Esophagus muscularis mucosa (tissue), 4 donors: ENCODE measurements at regions of chr16 and their contacts with region 1.

Region 1: GRCh38 chr16:8278181-8278580 is 312.1 kb downstream of the TMEM114 start:
- DNase-seq: no peak
- H3K4me3 ChIP-seq: no peak overlapping the region
- H3K27ac ChIP-seq: no peak overlapping the region
- H3K4me1 ChIP-seq: no peaks in the 10 kb centered on the region
- H3K27me3 ChIP-seq: no peaks in the 10 kb centered on the region
- CTCF ChIP-seq: no peak
- EP300 ChIP-seq: no peak
- POLR2A ChIP-seq: no peak

Region 2: DNA sequence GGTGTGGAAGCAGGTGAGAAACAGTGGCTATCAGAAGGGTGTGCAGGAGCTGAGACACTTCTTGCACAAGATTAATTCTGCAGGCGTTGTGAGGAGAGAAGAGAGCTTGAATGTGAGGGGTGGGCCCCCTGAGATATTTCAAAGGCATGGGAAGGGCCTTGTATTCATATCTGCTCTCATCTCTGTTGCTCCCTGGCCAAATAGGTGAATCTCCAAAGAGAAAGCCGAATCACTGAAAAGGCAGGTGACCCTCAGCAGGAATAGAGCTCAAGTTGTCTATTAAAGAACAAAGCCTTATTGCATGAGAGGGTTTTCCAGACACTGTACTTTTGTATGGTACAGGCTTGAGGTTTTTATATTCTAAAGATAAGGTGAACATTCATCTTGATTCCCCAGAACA is 61.0 kb before region 1 on chr16:
- intact Hi-C with region 1: loop called (anchors 10 kb)
- DNase-seq: no peak
- H3K4me3 ChIP-seq: no peak overlapping the region
- H3K27ac ChIP-seq: no peak overlapping the region
- H3K4me1 ChIP-seq: no peaks in the 10 kb centered on the region
- H3K27me3 ChIP-seq: no peaks in the 10 kb centered on the region
- CTCF ChIP-seq: no peak
- EP300 ChIP-seq: no peak
- POLR2A ChIP-seq: no peak

Region 3: DNA sequence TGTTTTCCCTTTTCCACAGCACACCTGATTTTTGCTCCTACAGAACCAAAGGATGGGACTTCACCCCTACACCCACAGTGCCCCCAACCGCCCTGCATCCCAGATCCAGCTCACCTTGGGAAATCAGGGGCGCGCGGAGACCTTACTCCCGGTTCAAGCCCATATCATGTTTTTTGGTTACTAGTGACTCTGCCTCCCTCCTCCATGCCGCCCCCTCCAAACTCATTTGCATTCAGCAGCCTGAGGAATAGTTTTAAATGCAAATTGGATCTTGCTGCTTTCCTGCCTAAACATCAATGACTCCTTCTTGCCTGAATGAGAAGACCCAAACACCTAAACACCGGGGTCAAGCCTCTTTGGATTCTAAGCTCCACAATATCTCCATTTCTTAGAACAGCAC is 19.7 kb before region 1 on chr16:
- intact Hi-C with region 1: no loop called
- DNase-seq: peak; percentile 85
- H3K4me3 ChIP-seq: no peak overlapping the region
- H3K27ac ChIP-seq: no peak overlapping the region
- H3K4me1 ChIP-seq: no peaks in the 10 kb centered on the region
- H3K27me3 ChIP-seq: no peaks in the 10 kb centered on the region
- CTCF ChIP-seq: no peak
- EP300 ChIP-seq: no peak
- POLR2A ChIP-seq: no peak